ENCODE measurements at regions of chr12 and their contacts with region 1.

Region 1: GRCh38 chr12:82627569-82628198 is 59.0 kb upstream of the TMTC2 start:
- DNase-seq: peak; percentile 67
- ATAC-seq: peak; percentile 93
- H3K4me3 ChIP-seq: no peak overlapping the region
- H3K27ac ChIP-seq: no peak overlapping the region
- H3K4me1 ChIP-seq: peaks cover 3% of the 10 kb centered on the region; the same call in 1 of the 2 replicates
- H3K27me3 ChIP-seq: no peaks in the 10 kb centered on the region
- CTCF ChIP-seq: peak; percentile 88

Region 2: DNA sequence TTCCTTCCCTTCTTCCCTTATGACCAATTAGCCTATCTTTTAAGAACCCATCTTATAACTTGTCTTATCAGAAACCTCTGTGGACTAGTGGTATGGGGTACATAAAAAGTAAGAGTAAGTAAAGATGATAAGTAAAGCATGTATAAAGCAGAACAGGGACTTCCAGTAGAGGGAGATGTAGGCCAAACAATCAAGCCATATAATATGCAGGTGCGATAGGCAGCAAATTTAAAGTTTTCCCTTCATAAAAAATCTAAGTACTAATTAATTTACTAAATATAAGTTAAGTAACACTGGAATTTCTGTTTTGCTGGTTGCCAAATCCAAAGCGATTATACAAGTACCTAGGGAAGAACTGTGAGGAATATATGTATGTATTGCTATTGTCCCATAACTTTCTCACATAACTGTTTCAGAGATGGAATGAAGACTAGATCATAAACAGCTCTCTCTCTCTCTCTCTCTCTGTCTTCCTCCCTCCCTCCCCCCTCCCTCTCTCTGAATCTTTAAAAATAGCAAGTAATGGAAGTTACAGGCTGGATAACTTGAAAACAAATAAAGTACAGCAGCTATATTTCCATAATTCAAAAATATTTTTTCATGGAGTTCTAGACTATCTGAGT is 243.6 kb before region 1 on chr12:
- CTCF ChIA-PET with region 1: interaction called, 3 read pairs
- POLR2A ChIA-PET with region 1: no interaction called
- intact Hi-C with region 1: loop called (anchors 1 kb)
- DNase-seq: peak; percentile 58
- ATAC-seq: peak; percentile 90
- H3K4me3 ChIP-seq: no peak overlapping the region
- H3K27ac ChIP-seq: no peak overlapping the region
- H3K4me1 ChIP-seq: no peaks in the 10 kb centered on the region
- H3K27me3 ChIP-seq: no peaks in the 10 kb centered on the region
- CTCF ChIP-seq: peak; percentile 80

Region 3: GRCh38 chr12:82527165-82527780 is 100.4 kb before region 1 on chr12:
- CTCF ChIA-PET with region 1: no interaction called
- POLR2A ChIA-PET with region 1: interaction called, 4 read pairs
- intact Hi-C with region 1: loop called (anchors 1 kb)
- DNase-seq: peak; percentile 77
- ATAC-seq: peak; percentile 60
- H3K4me3 ChIP-seq: no peak overlapping the region
- H3K27ac ChIP-seq: no peak overlapping the region
- H3K4me1 ChIP-seq: no peaks in the 10 kb centered on the region
- H3K27me3 ChIP-seq: no peaks in the 10 kb centered on the region
- CTCF ChIP-seq: peak; percentile 97

Region 4: DNA sequence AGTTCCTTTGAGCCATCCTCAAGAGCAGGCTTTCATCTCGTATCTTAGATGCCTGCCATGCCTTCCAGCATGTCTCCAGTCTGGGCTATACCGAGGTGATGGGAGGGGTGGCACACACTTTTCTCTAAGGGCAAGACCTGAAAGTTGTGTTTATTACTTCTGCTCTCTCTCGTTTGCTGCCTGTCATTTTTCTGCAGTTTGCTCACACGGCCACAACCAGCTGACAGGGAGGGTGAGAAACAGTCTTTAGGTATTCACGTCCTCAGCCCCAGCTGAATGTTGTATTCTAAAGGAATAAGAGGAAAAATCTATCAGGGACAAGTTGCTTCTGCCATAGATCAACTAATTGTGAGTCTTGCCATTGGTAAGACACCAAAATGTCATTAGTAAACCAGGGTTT is 147.0 kb after region 1 on chr12:
- CTCF ChIA-PET with region 1: no interaction called
- POLR2A ChIA-PET with region 1: no interaction called
- intact Hi-C with region 1: no loop called
- DNase-seq: no peak
- ATAC-seq: no peak
- H3K4me3 ChIP-seq: no peak overlapping the region
- H3K27ac ChIP-seq: no peak overlapping the region
- H3K4me1 ChIP-seq: no peaks in the 10 kb centered on the region; the same call in 1 of the 2 replicates
- H3K27me3 ChIP-seq: no peaks in the 10 kb centered on the region
- CTCF ChIP-seq: no peak

Measured in PC-3 (cell line).